OCI-LY7 (cell line): ENCODE measurements at regions of chr7 and their contacts with region 1.

Region 1: GRCh38 chr7:135388616-135389015 is 121.3 kb downstream of the CNOT4 start:
- DNase-seq: no peak
- H3K4me3 ChIP-seq: no peak overlapping the region
- H3K27ac ChIP-seq: no peak overlapping the region
- H3K4me1 ChIP-seq: peaks cover 6% of the 10 kb centered on the region
- CTCF ChIP-seq: no peak

Region 2: GRCh38 chr7:134854816-134855215 is 533.8 kb before region 1 on chr7:
- CTCF ChIA-PET with region 1: no interaction called
- POLR2A ChIA-PET with region 1: no interaction called
- intact Hi-C with region 1: no loop called
- DNase-seq: peak; percentile 8
- H3K4me3 ChIP-seq: no peak overlapping the region
- H3K27ac ChIP-seq: no peak overlapping the region
- H3K4me1 ChIP-seq: peaks cover 6% of the 10 kb centered on the region
- CTCF ChIP-seq: no peak

Region 3: GRCh38 chr7:135274495-135275268 is 113.9 kb before region 1 on chr7:
- CTCF ChIA-PET with region 1: no interaction called
- POLR2A ChIA-PET with region 1: interaction called, 12 read pairs
- intact Hi-C with region 1: no loop called
- DNase-seq: peak; percentile 72
- H3K4me3 ChIP-seq: no peak overlapping the region
- H3K27ac ChIP-seq: no peak overlapping the region
- H3K4me1 ChIP-seq: no peaks in the 10 kb centered on the region
- CTCF ChIP-seq: peak; percentile 87

Region 4: DNA sequence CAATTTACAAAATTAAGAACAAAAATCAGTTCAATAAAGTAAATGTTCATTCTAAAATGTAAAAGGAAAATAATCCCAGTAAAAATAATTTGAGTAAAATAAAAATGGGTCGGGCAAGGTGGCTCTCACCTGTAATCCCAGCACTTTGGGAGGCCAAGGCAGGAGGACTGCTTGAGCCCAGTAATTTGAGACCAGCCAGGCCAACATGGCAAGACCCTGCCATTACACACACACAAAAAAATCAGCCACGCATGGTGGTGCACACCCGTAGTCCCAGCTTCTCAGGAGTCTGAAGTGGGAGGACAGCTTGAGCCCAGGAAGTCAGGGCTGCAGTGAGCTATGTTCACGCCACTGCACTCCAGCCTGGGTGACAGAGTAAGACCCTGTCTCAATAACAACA is 86.9 kb after region 1 on chr7:
- CTCF ChIA-PET with region 1: no interaction called
- POLR2A ChIA-PET with region 1: no interaction called
- intact Hi-C with region 1: no loop called
- DNase-seq: no peak
- H3K4me3 ChIP-seq: no peak overlapping the region
- H3K27ac ChIP-seq: no peak overlapping the region
- H3K4me1 ChIP-seq: no peaks in the 10 kb centered on the region
- CTCF ChIP-seq: no peak